ENCODE measurements at regions of chr16 and their contacts with region 1.

Region 1: GRCh38 chr16:84714028-84714427 is 14.2 kb downstream of the USP10 start:
- DNase-seq: no peak
- ATAC-seq: no peak
- H3K4me3 Mint-ChIP-seq: no peak overlapping the region
- H3K27ac Mint-ChIP-seq: no peak overlapping the region
- H3K4me1 Mint-ChIP-seq: peaks cover 69% of the 10 kb centered on the region
- H3K27me3 Mint-ChIP-seq: no peaks in the 10 kb centered on the region
- CTCF ChIP-seq: no peak

Region 2: DNA sequence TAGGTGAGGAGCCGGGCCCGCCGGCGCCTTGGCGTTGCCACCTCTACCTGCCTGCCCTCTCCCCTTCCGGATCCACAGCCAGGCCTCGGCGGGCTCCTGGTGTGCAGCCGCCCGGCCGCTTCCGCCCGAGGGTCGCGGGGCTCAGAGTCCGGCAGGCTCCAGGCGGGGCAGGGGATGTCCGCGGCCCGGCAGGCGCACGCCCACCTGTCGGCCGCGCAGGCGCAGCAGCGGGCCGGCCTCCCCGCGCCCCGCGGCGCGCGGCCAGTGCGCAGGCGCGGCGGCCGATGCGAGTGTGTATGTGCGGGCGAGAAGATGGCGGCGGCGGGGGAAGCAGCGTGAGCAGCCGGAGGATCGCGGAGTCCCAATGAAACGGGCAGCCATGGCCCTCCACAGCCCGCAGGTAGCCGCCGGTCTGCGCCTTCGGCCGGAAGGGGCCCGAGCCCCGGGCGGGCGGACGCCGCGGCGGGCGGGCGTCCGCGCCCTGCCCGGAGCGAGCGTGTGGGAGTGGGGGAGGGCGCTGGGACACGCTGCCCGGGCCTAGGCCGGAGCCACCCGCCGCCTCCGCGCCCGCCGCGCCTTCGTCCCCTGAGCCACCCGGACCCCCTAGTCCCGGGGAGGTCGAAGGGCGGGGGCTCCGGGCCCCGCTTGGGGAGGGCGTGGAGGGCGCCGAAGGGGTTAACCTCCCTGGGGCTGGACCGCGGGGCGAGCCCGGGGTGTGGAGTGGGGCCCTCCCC is 14.1 kb before region 1 on chr16 and contains the start of gene USP10:
- CTCF ChIA-PET with region 1: interaction called, 16 read pairs
- POLR2A ChIA-PET with region 1: interaction called, 11 read pairs
- intact Hi-C with region 1: no loop called
- DNase-seq: peak; percentile 85
- ATAC-seq: peak; percentile 84
- H3K4me3 Mint-ChIP-seq: peak within 1 kb of the TSS; percentile 98
- H3K27ac Mint-ChIP-seq: peak within 1 kb of the TSS; percentile 96
- H3K4me1 Mint-ChIP-seq: peaks cover 36% of the 10 kb centered on the region
- H3K27me3 Mint-ChIP-seq: no peaks in the 10 kb centered on the region
- CTCF ChIP-seq: no peak
- total RNA-seq, gene USP10: 116 TPM

Region 3: GRCh38 chr16:84774810-84775209 is 60.8 kb after region 1 on chr16:
- CTCF ChIA-PET with region 1: no interaction called
- POLR2A ChIA-PET with region 1: no interaction called
- intact Hi-C with region 1: no loop called
- DNase-seq: no peak
- ATAC-seq: no peak
- H3K4me3 Mint-ChIP-seq: no peak overlapping the region
- H3K27ac Mint-ChIP-seq: no peak overlapping the region
- H3K4me1 Mint-ChIP-seq: no peaks in the 10 kb centered on the region
- H3K27me3 Mint-ChIP-seq: no peaks in the 10 kb centered on the region
- CTCF ChIP-seq: no peak